SK-N-SH (cell line): ENCODE measurements at regions of chr11 and their contacts with region 1.

Region 1: GRCh38 chr11:133163463-133164419 is 368.6 kb downstream of the OPCML start:
- DNase-seq: peak; percentile 55
- H3K4me3 ChIP-seq: no peak overlapping the region
- H3K27ac ChIP-seq: no peak overlapping the region
- H3K4me1 ChIP-seq: no peaks in the 10 kb centered on the region
- H3K27me3 ChIP-seq: no peaks in the 10 kb centered on the region
- CTCF ChIP-seq: peak; percentile 38; the same call in 1 of the 2 replicates
- EP300 ChIP-seq: no peak
- RAD21 ChIP-seq: peak; percentile 65

Region 2: GRCh38 chr11:133070791-133071190 is 93.0 kb before region 1 on chr11:
- CTCF ChIA-PET with region 1: no interaction called
- POLR2A ChIA-PET with region 1: no interaction called
- DNase-seq: no peak
- H3K4me3 ChIP-seq: no peak overlapping the region
- H3K27ac ChIP-seq: no peak overlapping the region
- H3K4me1 ChIP-seq: no peaks in the 10 kb centered on the region
- H3K27me3 ChIP-seq: no peaks in the 10 kb centered on the region
- CTCF ChIP-seq: no peak
- EP300 ChIP-seq: no peak
- RAD21 ChIP-seq: no peak

Region 3: GRCh38 chr11:133146697-133147306 is 16.9 kb before region 1 on chr11:
- CTCF ChIA-PET with region 1: interaction called, 23 read pairs
- POLR2A ChIA-PET with region 1: no interaction called
- DNase-seq: no peak
- H3K4me3 ChIP-seq: no peak overlapping the region
- H3K27ac ChIP-seq: no peak overlapping the region
- H3K4me1 ChIP-seq: no peaks in the 10 kb centered on the region; a peak in 1 of 4 replicates
- H3K27me3 ChIP-seq: no peaks in the 10 kb centered on the region
- CTCF ChIP-seq: no peak
- EP300 ChIP-seq: no peak
- RAD21 ChIP-seq: no peak

Region 4: GRCh38 chr11:133175103-133175502 is 11.4 kb after region 1 on chr11:
- CTCF ChIA-PET with region 1: interaction called, 13 read pairs
- POLR2A ChIA-PET with region 1: no interaction called
- DNase-seq: no peak
- H3K4me3 ChIP-seq: no peak overlapping the region
- H3K27ac ChIP-seq: no peak overlapping the region
- H3K4me1 ChIP-seq: no peaks in the 10 kb centered on the region
- H3K27me3 ChIP-seq: no peaks in the 10 kb centered on the region
- CTCF ChIP-seq: no peak
- EP300 ChIP-seq: no peak
- RAD21 ChIP-seq: no peak

Region 5: GRCh38 chr11:133181066-133181465 is 17.3 kb after region 1 on chr11:
- CTCF ChIA-PET with region 1: interaction called, 16 read pairs
- POLR2A ChIA-PET with region 1: no interaction called
- DNase-seq: no peak
- H3K4me3 ChIP-seq: no peak overlapping the region
- H3K27ac ChIP-seq: no peak overlapping the region
- H3K4me1 ChIP-seq: no peaks in the 10 kb centered on the region
- H3K27me3 ChIP-seq: no peaks in the 10 kb centered on the region
- CTCF ChIP-seq: no peak
- EP300 ChIP-seq: no peak
- RAD21 ChIP-seq: no peak